ENCODE measurements at regions of chr1 and their contacts with region 1.

Region 1: DNA sequence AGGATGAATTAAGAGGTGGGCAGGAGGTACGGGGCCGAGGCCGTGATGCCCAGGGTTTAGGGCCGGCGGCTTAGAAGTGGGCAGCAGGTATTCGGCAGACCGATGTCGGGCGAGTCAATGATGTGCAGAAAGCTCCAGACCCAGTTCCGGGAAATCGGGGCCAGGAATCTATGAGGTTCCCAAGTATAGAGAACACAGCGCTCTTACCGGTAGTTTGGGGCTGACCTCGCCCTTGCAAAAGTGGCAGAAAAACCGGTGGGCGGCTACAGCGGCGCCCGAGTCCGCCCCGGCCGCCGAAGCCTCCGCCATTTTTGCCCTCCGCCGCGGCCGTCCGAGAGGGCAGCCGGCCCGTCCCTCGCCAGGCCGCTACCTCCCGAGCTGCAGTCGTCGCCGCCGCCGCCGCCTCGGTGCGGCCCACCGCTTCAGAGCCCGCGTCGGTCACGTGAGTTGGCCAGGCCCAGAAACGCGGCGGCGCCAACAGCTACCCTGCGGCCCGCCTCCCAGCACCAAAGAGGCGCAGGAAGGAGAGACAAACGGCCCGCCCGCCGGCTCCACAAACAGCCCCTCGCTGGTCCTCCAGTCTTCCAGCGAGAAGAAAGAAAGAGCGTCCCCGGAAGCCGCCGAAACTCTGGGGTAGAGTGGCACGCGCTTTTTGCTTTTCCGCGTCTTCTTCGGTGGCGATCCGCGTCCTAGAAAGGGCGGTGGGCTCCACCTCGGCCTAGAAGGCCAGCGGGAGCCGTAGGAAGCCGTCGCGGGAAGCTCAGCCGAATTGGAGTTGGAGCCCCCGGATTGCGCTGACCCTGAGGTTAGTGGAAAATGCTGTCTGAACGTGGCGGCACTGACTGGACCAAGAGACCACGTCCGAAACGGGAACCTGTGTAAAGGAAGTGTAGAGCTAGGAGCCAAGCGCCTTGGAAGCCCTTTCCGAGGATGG is at the starts of genes POLR3C and RNF115:
- DNase-seq: peak; percentile 95
- H3K4me3 Mint-ChIP-seq: peak within 1 kb of the TSS; percentile 90
- H3K27ac Mint-ChIP-seq: peak within 1 kb of the TSS; percentile 94
- H3K4me1 Mint-ChIP-seq: peaks cover 6% of the 10 kb centered on the region
- H3K27me3 Mint-ChIP-seq: no peaks in the 10 kb centered on the region
- CTCF ChIP-seq: no peak
- total RNA-seq, gene POLR3C: 67.9 and 96.8 TPM in 2 replicates
- total RNA-seq, gene RNF115: 16.8 and 19.5 TPM in 2 replicates

Region 2: GRCh38 chr1:145706086-145706680 is 117.6 kb before region 1 on chr1:
- CTCF ChIA-PET with region 1: no interaction called
- POLR2A ChIA-PET with region 1: no interaction called
- intact Hi-C with region 1: no loop called
- DNase-seq: peak; percentile 68
- H3K4me3 Mint-ChIP-seq: no peak overlapping the region
- H3K27ac Mint-ChIP-seq: peak overlapping the region; percentile 65
- H3K4me1 Mint-ChIP-seq: peaks cover 26% of the 10 kb centered on the region
- H3K27me3 Mint-ChIP-seq: no peaks in the 10 kb centered on the region
- CTCF ChIP-seq: no peak

Region 3: GRCh38 chr1:145736191-145736590 is 87.6 kb before region 1 on chr1:
- CTCF ChIA-PET with region 1: no interaction called
- POLR2A ChIA-PET with region 1: no interaction called
- intact Hi-C with region 1: no loop called
- DNase-seq: no peak
- H3K4me3 Mint-ChIP-seq: no peak overlapping the region
- H3K27ac Mint-ChIP-seq: no peak overlapping the region
- H3K4me1 Mint-ChIP-seq: no peaks in the 10 kb centered on the region
- H3K27me3 Mint-ChIP-seq: no peaks in the 10 kb centered on the region
- CTCF ChIP-seq: no peak

Region 4: DNA sequence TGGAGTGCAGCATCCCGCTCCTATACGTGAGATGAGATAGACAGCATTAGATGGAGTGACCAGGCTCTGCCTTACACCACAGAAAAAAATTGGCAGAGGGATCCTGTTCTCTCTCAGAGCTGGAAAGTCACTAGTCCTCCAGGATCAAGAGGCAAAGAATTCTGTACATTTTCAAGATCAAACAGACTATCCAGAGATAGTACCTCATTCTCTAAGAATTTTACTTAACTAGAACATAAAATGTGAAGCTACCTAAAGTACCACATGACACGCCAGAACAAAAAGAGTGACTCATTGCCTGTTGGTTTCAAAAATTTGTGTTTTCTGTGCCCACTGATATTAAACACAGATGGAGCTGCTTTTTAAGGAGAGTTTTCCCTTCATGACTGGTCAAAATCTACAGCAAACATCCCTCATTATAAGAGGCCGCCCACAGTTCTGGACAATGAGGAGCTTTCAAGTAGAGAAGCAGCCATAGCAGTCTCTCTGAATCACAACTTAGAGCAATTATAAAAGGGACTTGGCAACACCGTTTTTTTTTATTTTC is 72.3 kb before region 1 on chr1:
- CTCF ChIA-PET with region 1: interaction called, 5 read pairs
- POLR2A ChIA-PET with region 1: interaction called, 7 read pairs
- intact Hi-C with region 1: loop called (anchors 10 kb)
- DNase-seq: peak; percentile 50
- H3K4me3 Mint-ChIP-seq: no peak overlapping the region
- H3K27ac Mint-ChIP-seq: peak overlapping the region; percentile 87
- H3K4me1 Mint-ChIP-seq: peaks cover 14% of the 10 kb centered on the region
- H3K27me3 Mint-ChIP-seq: no peaks in the 10 kb centered on the region
- CTCF ChIP-seq: no peak

Region 5: DNA sequence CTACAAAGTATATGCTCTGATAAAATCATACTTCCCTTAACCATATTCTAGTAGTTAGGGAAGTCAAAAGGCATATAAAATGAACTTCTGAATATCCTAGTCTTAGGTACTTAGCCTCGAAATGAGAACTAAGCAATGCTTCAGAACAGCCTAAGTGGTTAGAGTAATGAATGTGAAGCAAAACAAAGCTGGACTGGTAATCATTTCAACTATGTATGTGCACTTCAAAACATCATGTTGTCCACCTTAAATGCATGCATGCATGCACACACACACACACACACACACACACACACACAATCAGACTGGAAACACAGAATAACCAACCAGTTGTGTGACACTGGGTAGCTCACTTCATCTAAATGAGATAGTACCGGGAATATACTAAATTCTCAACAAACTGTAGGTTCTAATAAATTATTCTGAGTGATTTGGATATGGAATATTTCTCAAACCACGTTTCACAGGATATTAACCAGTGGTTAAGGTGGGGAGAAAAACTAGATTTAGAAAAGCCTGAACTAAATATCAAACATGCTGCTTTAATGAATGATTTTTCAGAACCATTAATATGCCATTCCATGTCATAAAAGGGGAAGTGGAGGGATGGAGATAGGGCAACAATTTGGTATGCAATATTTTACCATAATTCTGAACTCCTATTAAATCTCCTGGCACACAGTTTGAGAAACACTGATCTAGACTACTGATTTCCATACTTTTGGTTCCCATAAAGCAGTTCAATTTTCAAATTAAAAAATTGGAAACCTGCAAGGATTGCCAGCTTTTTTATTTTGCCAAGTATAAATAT is 19.4 kb before region 1 on chr1:
- CTCF ChIA-PET with region 1: interaction called, 3 read pairs
- POLR2A ChIA-PET with region 1: interaction called, 46 read pairs
- intact Hi-C with region 1: no loop called
- DNase-seq: no peak
- H3K4me3 Mint-ChIP-seq: no peak overlapping the region
- H3K27ac Mint-ChIP-seq: no peak overlapping the region
- H3K4me1 Mint-ChIP-seq: peaks cover 41% of the 10 kb centered on the region
- H3K27me3 Mint-ChIP-seq: no peaks in the 10 kb centered on the region
- CTCF ChIP-seq: no peak

Region 6: GRCh38 chr1:145983206-145983675 is 159.4 kb after region 1 on chr1:
- CTCF ChIA-PET with region 1: no interaction called
- POLR2A ChIA-PET with region 1: no interaction called
- intact Hi-C with region 1: no loop called
- DNase-seq: no peak
- H3K4me3 Mint-ChIP-seq: no peak overlapping the region
- H3K27ac Mint-ChIP-seq: no peak overlapping the region
- H3K4me1 Mint-ChIP-seq: peaks cover 31% of the 10 kb centered on the region
- H3K27me3 Mint-ChIP-seq: no peaks in the 10 kb centered on the region
- CTCF ChIP-seq: no peak

Measured in MCF 10A (cell line).